BJ (cell line): ENCODE measurements at regions of chr14 and their contacts with region 1.

Region 1: GRCh38 chr14:61512026-61512834 is 183.1 kb upstream of the HIF1A start:
- DNase-seq: peak; percentile 85
- H3K4me3 ChIP-seq: no peak overlapping the region
- H3K27me3 ChIP-seq: no peaks in the 10 kb centered on the region
- CTCF ChIP-seq: no peak

Region 2: DNA sequence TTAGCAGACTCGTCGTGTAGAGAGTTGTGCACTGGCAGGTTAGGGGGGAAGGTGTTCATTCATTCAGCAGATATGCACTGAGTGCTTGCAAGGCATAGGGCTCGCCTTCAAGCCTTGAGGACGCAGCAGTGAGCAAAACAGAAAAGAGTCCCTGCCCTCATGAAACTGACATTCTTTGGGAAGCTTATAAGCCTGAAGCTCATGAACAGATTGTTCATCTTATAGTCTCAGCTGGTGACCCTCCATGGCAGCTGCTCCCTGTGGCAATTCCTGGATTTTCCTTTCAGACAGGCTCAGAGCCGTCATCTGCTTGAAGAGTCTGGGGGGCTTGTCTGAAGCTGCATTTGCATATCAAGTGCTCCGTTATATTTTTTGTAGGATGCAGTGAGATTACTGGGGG is 42.4 kb before region 1 on chr14:
- CTCF ChIA-PET with region 1: no interaction called
- POLR2A ChIA-PET with region 1: no interaction called
- DNase-seq: no peak
- H3K4me3 ChIP-seq: no peak overlapping the region
- H3K27me3 ChIP-seq: no peaks in the 10 kb centered on the region
- CTCF ChIP-seq: no peak

Region 3: GRCh38 chr14:61525293-61526011 is 13.2 kb after region 1 on chr14:
- CTCF ChIA-PET with region 1: interaction called, 4 read pairs
- POLR2A ChIA-PET with region 1: interaction called, 14 read pairs
- DNase-seq: no peak
- H3K4me3 ChIP-seq: no peak overlapping the region
- H3K27me3 ChIP-seq: no peaks in the 10 kb centered on the region
- CTCF ChIP-seq: no peak

Region 4: GRCh38 chr14:61537563-61538463 is 25.6 kb after region 1 on chr14:
- CTCF ChIA-PET with region 1: interaction called, 3 read pairs
- POLR2A ChIA-PET with region 1: interaction called, 15 read pairs
- DNase-seq: no peak
- H3K4me3 ChIP-seq: no peak overlapping the region
- H3K27me3 ChIP-seq: no peaks in the 10 kb centered on the region
- CTCF ChIP-seq: no peak

Region 5: DNA sequence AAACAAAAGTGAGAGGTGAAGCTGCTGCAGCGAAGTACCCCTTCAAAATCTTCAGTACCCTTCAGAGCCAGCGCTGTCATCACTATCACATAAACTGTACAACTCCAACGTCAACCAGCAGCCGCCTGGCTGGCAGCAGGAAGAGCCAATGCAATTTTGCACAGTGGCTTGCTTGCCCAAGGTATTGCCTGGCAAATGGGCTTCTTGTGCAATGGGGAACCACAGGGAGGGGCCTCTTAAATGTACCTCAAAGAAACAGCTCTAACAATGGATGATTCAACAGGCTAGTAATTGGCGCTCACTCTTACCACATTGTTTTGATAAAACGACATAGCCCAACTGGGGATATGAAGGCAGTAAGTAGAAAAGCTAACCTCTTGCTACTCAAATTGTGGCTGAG is 57.6 kb after region 1 on chr14:
- CTCF ChIA-PET with region 1: interaction called, 3 read pairs
- POLR2A ChIA-PET with region 1: interaction called, 27 read pairs
- DNase-seq: no peak
- H3K4me3 ChIP-seq: no peak overlapping the region
- H3K27me3 ChIP-seq: no peaks in the 10 kb centered on the region
- CTCF ChIP-seq: no peak

Region 6: GRCh38 chr14:61940666-61941423 is 428.6 kb after region 1 on chr14:
- CTCF ChIA-PET with region 1: no interaction called
- POLR2A ChIA-PET with region 1: interaction called, 30 read pairs
- DNase-seq: no peak
- H3K4me3 ChIP-seq: no peak overlapping the region
- H3K27me3 ChIP-seq: no peaks in the 10 kb centered on the region
- CTCF ChIP-seq: no peak